Left ventricle myocardium superior (tissue), 1 donor: ENCODE measurements at regions of chr16 and their contacts with region 1.

Region 1: GRCh38 chr16:31459722-31460581 is 651 bp downstream of the ARMC5 start:
- DNase-seq: peak; percentile 100
- ATAC-seq: peak; percentile 88

Region 2: GRCh38 chr16:31507929-31508705 is 48.2 kb after region 1 on chr16 and contains the start of gene RUSF1:
- intact Hi-C with region 1: no loop called
- DNase-seq: peak; percentile 96
- ATAC-seq: peak; percentile 97
- total RNA-seq, gene RUSF1: 18.9 TPM

Region 3: GRCh38 chr16:31700526-31701388 is 240.8 kb after region 1 on chr16:
- intact Hi-C with region 1: no loop called
- DNase-seq: peak; percentile 91
- ATAC-seq: peak; percentile 99

Region 4: DNA sequence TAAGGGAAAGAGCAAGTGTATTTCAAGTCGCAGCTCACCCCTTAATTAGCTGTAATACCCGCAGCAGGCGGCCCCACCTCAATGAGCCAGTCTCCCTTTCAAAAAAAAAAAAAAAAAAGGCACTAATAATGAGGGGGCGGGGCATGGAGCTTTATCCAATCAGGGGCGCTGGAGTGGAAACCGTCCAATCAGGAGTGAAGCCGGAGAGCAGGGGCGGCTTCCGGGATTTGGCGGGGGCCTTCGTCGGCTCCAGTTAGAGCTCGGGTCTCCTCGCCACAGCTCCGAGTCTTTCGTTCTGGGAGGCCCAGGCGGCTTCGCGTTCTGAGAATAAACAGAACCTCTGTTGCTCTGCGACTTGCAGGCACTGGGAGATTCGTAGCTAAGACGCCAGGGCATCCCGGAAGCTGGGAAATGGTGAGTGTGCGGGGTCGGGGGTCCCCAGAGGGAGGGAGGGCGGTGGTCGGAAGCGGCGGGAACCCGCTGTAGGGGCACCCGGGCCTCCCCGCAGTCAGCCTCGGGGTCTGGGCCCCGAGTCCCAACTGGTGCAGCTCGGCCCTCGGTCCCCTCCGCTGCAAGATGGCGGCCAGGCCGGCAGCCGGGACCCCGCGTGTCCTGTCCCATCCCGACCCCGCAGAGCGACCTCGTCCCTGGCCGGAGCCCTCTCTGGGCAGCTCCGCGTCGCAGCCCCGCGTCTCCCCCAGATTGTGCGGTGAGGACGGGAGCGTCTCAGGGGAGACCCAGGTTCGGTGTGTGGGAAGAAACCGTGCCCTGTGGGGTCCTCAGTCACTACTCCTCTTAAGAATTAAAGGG is 413.8 kb after region 1 on chr16 and contains the start of gene ZNF267:
- intact Hi-C with region 1: loop called (anchors 10 kb)
- DNase-seq: peak; percentile 94
- ATAC-seq: peak; percentile 97
- total RNA-seq, gene ZNF267: 5.2 TPM